T-cell (primary cell): ENCODE measurements at regions of chr13 and their contacts with region 1.

Region 1: GRCh38 chr13:95355494-95355893 is 54.2 kb upstream of the ABCC4 start:
- DNase-seq: no peak
- ATAC-seq: no peak
- H3K4me3 ChIP-seq: no peak overlapping the region
- H3K4me3 Mint-ChIP-seq: no peak overlapping the region
- H3K27ac ChIP-seq: no peak overlapping the region
- H3K27ac Mint-ChIP-seq: no peak overlapping the region
- H3K4me1 ChIP-seq: no peaks in the 10 kb centered on the region
- H3K4me1 Mint-ChIP-seq: no peaks in the 10 kb centered on the region
- H3K27me3 ChIP-seq: no peaks in the 10 kb centered on the region
- H3K27me3 Mint-ChIP-seq: peaks cover 0 to 2% of the 10 kb centered on the region in 2 donors

Region 2: GRCh38 chr13:95050800-95051615 is 304.5 kb before region 1 on chr13:
- CTCF ChIA-PET with region 1: no interaction called
- POLR2A ChIA-PET with region 1: no interaction called
- DNase-seq: no peak
- ATAC-seq: no peak
- H3K4me3 ChIP-seq: no peak overlapping the region
- H3K4me3 Mint-ChIP-seq: no peak overlapping the region
- H3K27ac ChIP-seq: no peak overlapping the region
- H3K27ac Mint-ChIP-seq: no peak overlapping the region
- H3K4me1 ChIP-seq: no peaks in the 10 kb centered on the region
- H3K4me1 Mint-ChIP-seq: peaks cover 0 to 10% (median 9%) of the 10 kb centered on the region in 3 donors
- H3K27me3 ChIP-seq: no peaks in the 10 kb centered on the region
- H3K27me3 Mint-ChIP-seq: no peaks in the 10 kb centered on the region

Region 3: DNA sequence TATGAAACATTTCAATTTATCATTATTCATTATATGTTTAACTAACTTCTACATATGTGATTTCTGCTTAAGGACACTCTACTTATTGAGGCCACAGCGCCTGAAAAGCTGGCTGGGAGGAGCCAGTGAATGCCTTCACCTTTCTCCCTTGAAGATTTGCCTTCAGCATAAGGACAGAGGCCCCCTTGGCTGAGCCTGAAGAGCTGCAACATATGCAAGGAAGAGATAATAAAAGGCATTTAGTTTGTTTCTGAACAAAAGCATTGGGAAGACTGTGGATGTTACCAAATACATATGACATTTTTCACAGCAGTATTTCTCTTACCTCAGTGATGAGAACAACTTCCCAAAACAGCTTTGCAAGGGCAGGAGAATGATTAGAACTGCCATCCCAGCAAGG is 146.4 kb before region 1 on chr13:
- CTCF ChIA-PET with region 1: no interaction called
- POLR2A ChIA-PET with region 1: interaction called in 1 of 2 experiments, 21 read pairs
- DNase-seq: no peak
- ATAC-seq: no peak
- H3K4me3 ChIP-seq: no peak overlapping the region
- H3K4me3 Mint-ChIP-seq: no peak overlapping the region
- H3K27ac ChIP-seq: no peak overlapping the region
- H3K27ac Mint-ChIP-seq: no peak overlapping the region
- H3K4me1 ChIP-seq: no peaks in the 10 kb centered on the region
- H3K4me1 Mint-ChIP-seq: no peaks in the 10 kb centered on the region
- H3K27me3 ChIP-seq: no peaks in the 10 kb centered on the region
- H3K27me3 Mint-ChIP-seq: no peaks in the 10 kb centered on the region